IMR-90 (cell line): ENCODE measurements at regions of chr1 and their contacts with region 1.

Region 1: DNA sequence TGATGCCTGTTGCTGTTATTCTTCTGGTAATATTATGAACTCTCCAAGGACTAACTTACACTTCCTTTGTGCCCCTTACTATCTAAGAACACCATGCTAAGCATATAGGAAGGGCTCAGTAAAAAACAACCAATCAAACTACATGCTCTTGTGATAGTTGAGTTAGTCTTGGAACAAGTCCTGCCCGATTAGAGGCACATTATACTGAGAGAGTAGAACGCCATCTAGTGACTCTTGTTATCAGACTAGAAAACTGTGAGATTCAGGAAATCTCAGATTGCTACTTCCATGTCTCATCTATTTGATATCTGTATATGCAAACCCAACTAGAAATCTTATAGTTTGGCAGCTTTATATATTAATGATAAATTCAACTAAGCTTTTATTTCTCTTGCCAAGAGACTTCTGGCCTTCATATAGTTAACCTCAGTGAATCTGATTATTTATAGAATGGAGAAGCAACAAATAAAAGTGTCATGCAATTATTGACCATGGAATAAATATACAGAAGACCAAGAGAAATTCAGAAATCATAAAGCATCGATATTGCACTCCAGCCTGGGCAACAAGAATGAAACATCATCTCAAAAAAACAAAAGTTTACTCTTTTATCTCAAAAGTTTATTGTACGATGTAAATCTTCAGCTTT is 7.8 kb upstream of the SRRM1 start:
- DNase-seq: peak; percentile 83
- ATAC-seq: peak; percentile 96
- H3K4me3 ChIP-seq: no peak overlapping the region
- H3K27ac ChIP-seq: no peak overlapping the region
- H3K4me1 ChIP-seq: no peaks in the 10 kb centered on the region
- H3K27me3 ChIP-seq: peaks cover 18% of the 10 kb centered on the region
- CTCF ChIP-seq: peak; percentile 81
- POLR2A ChIP-seq: no peak
- RAD21 ChIP-seq: peak; percentile 81

Region 2: DNA sequence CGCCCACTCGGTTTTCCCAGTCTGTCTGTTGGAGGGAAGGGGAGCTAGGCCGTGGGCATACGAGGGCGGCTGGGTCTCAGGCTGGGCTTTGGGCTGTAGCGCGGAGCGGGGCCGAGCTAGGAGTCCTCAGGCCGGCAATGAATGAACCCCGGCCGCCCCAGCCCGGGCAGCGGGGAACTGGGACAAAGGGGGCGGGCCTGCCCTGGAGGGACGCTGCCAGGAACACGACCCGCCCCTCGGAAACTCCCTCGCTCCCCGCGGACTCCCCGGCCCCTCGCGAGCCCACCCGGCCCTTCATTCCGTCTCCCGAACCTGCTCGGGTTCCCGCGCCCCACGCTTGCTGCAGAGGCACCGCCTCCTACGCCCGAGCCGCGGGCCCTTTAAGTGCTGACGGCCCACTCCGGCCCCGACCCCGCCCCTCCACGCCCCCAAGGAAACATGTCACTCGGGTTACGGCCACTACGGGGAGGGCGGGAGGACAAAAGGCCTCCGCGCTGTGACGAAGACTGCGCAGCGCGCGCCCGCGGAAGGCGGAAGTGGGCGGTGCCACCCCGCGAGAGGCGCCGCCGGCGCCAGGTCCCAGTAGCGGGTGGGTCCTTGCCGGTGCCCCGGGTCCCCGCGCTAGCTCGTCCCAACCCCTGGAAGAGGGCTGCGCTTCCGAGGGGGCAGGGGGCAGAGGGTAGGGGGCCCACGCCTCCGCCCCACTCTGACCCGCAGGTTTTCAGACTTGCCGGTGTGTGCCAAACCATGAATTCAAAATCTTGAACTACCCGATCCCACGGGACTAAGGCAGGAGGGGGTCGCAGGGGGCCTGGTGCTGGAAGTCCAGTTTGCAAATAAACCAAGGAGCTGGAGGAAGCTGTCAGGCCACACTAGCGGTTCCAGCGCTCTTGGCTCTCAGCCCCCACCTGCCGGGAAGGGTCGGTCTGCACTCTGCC is 834.6 kb before region 1 on chr1 and contains the start of gene GALE:
- CTCF ChIA-PET with region 1: no interaction called
- POLR2A ChIA-PET with region 1: no interaction called
- dilution Hi-C with region 1: no loop called
- in situ Hi-C with region 1: no loop called
- intact Hi-C with region 1: no loop called
- DNase-seq: peak; percentile 92
- ATAC-seq: peak; percentile 92
- H3K4me3 ChIP-seq: peak within 1 kb of the TSS; percentile 67
- H3K27ac ChIP-seq: peak within 1 kb of the TSS; percentile 75
- H3K4me1 ChIP-seq: peaks cover 7% of the 10 kb centered on the region; the same call in 1 of the 2 replicates
- H3K27me3 ChIP-seq: no peaks in the 10 kb centered on the region
- CTCF ChIP-seq: no peak
- POLR2A ChIP-seq: peak; percentile 53; the same call in 1 of the 2 replicates
- RAD21 ChIP-seq: no peak
- total RNA-seq, gene GALE: 28.3 and 31.7 TPM in 2 replicates

Region 3: GRCh38 chr1:24191860-24192259 is 443.5 kb before region 1 on chr1:
- CTCF ChIA-PET with region 1: interaction called, 3 read pairs
- POLR2A ChIA-PET with region 1: no interaction called
- dilution Hi-C with region 1: no loop called
- in situ Hi-C with region 1: loop called (anchors 5 kb)
- intact Hi-C with region 1: no loop called
- DNase-seq: peak; percentile 66
- ATAC-seq: peak; percentile 73
- H3K4me3 ChIP-seq: no peak overlapping the region
- H3K27ac ChIP-seq: no peak overlapping the region
- H3K4me1 ChIP-seq: peaks cover 4% of the 10 kb centered on the region
- H3K27me3 ChIP-seq: peaks cover 14% of the 10 kb centered on the region
- CTCF ChIP-seq: no peak
- POLR2A ChIP-seq: no peak
- RAD21 ChIP-seq: no peak

Region 4: GRCh38 chr1:24391882-24392603 is 243.3 kb before region 1 on chr1:
- CTCF ChIA-PET with region 1: interaction called, 3 read pairs
- POLR2A ChIA-PET with region 1: no interaction called
- dilution Hi-C with region 1: no loop called
- in situ Hi-C with region 1: loop called (anchors 10 kb)
- intact Hi-C with region 1: loop called (anchors 1 kb)
- DNase-seq: peak; percentile 51
- ATAC-seq: peak; percentile 71
- H3K4me3 ChIP-seq: no peak overlapping the region
- H3K27ac ChIP-seq: no peak overlapping the region
- H3K4me1 ChIP-seq: peaks cover 6% of the 10 kb centered on the region
- H3K27me3 ChIP-seq: no peaks in the 10 kb centered on the region
- CTCF ChIP-seq: peak; percentile 77
- POLR2A ChIP-seq: no peak
- RAD21 ChIP-seq: peak; percentile 83

Region 5: GRCh38 chr1:24541711-24542346 is 93.5 kb before region 1 on chr1:
- CTCF ChIA-PET with region 1: interaction called, 5 read pairs
- POLR2A ChIA-PET with region 1: no interaction called
- dilution Hi-C with region 1: no loop called
- in situ Hi-C with region 1: no loop called
- intact Hi-C with region 1: loop called (anchors 5 kb)
- DNase-seq: no peak
- ATAC-seq: no peak
- H3K4me3 ChIP-seq: no peak overlapping the region
- H3K27ac ChIP-seq: no peak overlapping the region
- H3K4me1 ChIP-seq: peaks cover 3% of the 10 kb centered on the region; the same call in 1 of the 2 replicates
- H3K27me3 ChIP-seq: no peaks in the 10 kb centered on the region
- CTCF ChIP-seq: peak; percentile 43
- POLR2A ChIP-seq: no peak
- RAD21 ChIP-seq: peak; percentile 31; the same call in 1 of the 2 replicates

Region 6: GRCh38 chr1:24594154-24594553 is 41.2 kb before region 1 on chr1:
- CTCF ChIA-PET with region 1: interaction called, 3 read pairs
- POLR2A ChIA-PET with region 1: no interaction called
- dilution Hi-C with region 1: no loop called
- in situ Hi-C with region 1: no loop called
- intact Hi-C with region 1: loop called (anchors 1 kb)
- DNase-seq: no peak
- ATAC-seq: no peak
- H3K4me3 ChIP-seq: no peak overlapping the region
- H3K27ac ChIP-seq: no peak overlapping the region
- H3K4me1 ChIP-seq: no peaks in the 10 kb centered on the region
- H3K27me3 ChIP-seq: peaks cover 19% of the 10 kb centered on the region
- CTCF ChIP-seq: no peak
- POLR2A ChIP-seq: no peak
- RAD21 ChIP-seq: no peak